Activated CD4-positive, alpha-beta memory T cell treated with anti-CD3 and anti-CD28 coated beads for 36 hours (primary cell): ENCODE measurements at regions of chr11 and their contacts with region 1.

Region 1: DNA sequence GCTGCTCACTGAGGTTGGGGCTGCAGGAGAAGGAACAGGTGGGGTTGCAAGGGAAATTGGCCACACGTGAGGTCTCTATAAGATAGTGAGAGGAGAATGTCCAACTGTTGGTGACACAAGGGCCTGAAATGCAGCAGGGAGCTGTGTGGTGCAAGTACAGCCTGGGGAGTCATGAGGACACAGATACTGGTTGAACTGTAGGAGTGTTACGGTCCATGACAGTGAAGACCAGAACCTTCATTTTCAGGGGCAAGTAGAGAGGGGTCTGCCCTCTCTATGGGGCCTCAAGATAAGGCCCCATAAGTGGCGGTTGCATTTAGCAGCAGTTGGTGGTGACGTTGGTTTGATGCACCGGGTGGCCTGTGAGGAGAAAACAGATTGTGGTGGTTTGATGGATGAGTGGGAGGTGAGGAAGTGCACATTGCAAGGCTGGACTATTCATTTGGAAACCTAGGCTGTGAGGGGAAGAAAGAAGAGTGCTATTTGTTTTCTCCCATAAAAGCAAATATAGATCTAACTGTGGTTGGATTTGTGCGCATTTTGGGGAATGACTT is 39.4 kb downstream of the MICAL2 start:
- DNase-seq: peak; percentile 83
- H3K4me3 Mint-ChIP-seq: peak overlapping the region; percentile 30
- H3K27ac Mint-ChIP-seq: peak overlapping the region; percentile 93
- H3K4me1 Mint-ChIP-seq: peaks cover 63% of the 10 kb centered on the region
- H3K27me3 Mint-ChIP-seq: no peaks in the 10 kb centered on the region

Region 2: GRCh38 chr11:11230802-11231562 is 918.8 kb before region 1 on chr11:
- CTCF ChIA-PET with region 1: no interaction called
- POLR2A ChIA-PET with region 1: no interaction called
- intact Hi-C with region 1: no loop called
- DNase-seq: peak; percentile 36
- H3K4me3 Mint-ChIP-seq: no peak overlapping the region
- H3K27ac Mint-ChIP-seq: no peak overlapping the region
- H3K4me1 Mint-ChIP-seq: no peaks in the 10 kb centered on the region
- H3K27me3 Mint-ChIP-seq: peaks cover 3% of the 10 kb centered on the region

Region 3: DNA sequence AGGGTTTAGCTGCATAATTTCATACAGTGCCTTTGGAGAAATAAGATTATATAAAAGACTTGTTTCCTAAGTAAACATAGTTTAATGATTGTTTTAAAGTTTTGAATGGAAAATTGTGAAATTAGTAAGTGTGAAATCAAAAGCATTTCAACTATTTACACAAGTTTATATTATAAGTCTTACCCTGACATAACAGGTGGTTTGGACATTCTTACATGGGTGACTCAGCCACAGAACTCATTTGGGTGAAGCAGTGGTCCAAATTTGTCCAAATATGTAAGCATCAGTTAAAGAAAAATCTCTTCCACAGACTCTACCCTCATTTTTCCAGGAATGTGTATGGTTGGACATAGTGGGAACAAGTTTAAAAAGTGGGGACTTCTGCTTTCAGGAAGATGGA is 240.0 kb before region 1 on chr11:
- CTCF ChIA-PET with region 1: no interaction called
- POLR2A ChIA-PET with region 1: no interaction called
- intact Hi-C with region 1: no loop called
- DNase-seq: no peak
- H3K4me3 Mint-ChIP-seq: no peak overlapping the region
- H3K27ac Mint-ChIP-seq: no peak overlapping the region
- H3K4me1 Mint-ChIP-seq: no peaks in the 10 kb centered on the region
- H3K27me3 Mint-ChIP-seq: no peaks in the 10 kb centered on the region

Region 4: DNA sequence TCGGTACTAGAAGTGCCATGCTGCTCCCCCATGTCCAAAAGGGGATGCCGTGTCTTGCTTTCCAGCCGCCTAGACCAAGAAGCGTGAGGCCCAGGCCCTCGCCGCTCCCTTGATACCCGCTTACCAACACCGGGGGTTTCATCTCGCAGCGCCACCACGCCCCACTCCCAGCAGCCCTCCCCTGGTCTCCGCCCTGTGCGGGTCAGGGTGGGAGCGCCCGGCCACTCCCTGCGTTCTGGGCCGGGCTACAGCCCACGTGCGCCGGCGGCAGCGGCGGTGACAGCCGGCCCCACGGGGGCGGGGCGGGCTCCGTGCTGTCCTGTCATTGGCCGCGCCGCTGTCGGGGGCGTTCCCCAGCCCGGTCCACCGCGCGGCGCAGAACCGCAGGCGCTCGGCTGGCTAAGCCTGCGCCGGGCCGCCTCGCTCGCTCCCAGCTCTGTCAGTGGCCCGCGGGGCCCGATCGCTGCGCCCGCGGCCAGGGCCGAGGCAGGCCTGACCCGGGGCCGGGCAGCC is 39.5 kb before region 1 on chr11 and contains the start of gene MICAL2:
- CTCF ChIA-PET with region 1: no interaction called
- POLR2A ChIA-PET with region 1: interaction called, 6 read pairs
- intact Hi-C with region 1: loop called (anchors 1 kb)
- DNase-seq: peak; percentile 91
- H3K4me3 Mint-ChIP-seq: peak within 1 kb of the TSS; percentile 82
- H3K27ac Mint-ChIP-seq: peak within 1 kb of the TSS; percentile 91
- H3K4me1 Mint-ChIP-seq: peaks cover 40% of the 10 kb centered on the region
- H3K27me3 Mint-ChIP-seq: no peaks in the 10 kb centered on the region
- total RNA-seq, gene MICAL2: 213 to 220 TPM

Region 5: DNA sequence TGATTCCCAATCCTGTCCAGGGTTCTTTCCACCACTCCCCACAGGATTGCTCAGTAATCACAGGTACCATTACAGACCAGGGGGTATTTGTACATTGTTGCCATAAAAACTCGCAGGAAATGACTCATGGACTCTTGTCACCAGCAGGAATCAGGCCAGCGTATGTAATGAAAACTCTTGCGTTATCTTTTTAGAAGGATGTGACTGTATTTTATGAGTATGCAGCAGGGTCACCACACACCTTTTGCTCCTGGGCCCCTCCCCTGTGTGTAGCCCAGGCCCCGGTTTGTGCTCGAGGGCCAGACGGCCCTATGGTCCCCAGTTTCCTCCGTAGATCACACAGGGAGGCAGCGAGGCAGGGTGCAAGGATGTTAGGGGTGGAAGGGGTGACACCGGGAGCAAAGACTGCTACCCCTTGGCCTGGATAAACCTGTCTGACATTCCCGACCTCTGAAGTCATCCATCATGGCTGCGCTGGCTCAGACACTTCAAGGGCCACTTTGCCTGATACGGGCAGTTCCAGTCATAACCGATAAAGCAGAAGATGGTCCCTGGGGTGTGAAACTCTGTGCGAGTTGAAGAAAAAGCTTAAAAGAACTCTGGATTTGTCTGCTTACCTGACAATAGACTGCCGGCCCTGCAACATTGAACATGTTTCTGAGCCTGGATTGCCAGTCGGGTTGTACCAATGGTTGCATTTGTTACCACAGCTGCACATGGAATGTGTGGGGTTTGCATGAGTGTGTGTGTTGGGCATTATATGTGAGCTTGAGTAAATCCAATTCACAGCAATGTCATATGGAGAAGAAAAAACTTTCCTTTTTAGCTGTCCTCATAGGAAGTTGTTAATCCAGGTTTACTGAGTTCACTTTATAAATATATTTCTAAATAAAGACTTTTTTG is 17.6 kb after region 1 on chr11:
- CTCF ChIA-PET with region 1: interaction called, 5 read pairs
- POLR2A ChIA-PET with region 1: interaction called, 8 read pairs
- intact Hi-C with region 1: loop called (anchors 1 kb)
- DNase-seq: peak; percentile 71
- H3K4me3 Mint-ChIP-seq: no peak overlapping the region
- H3K27ac Mint-ChIP-seq: peak overlapping the region; percentile 75
- H3K4me1 Mint-ChIP-seq: peaks cover 36% of the 10 kb centered on the region
- H3K27me3 Mint-ChIP-seq: no peaks in the 10 kb centered on the region

Region 6: DNA sequence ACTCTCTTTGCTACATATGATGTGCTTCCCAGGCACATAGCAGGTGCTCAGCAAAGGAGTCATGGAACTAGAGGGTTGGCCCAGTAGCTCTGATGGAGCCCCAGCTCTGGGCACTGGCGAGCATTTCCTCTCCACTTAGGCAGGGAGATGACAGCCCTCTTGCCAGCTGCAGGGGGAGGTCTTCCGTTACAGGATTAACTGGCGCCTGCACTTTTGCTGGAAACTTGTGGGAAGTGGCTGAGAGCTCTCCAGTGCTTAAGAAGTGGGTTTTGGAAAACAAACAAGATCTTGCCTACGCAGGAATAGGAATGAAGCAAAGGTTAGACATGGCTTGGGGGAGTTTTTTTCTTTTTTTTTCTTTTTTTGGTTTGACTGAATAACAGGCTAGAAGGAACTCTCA is 36.2 kb after region 1 on chr11:
- CTCF ChIA-PET with region 1: interaction called, 9 read pairs
- POLR2A ChIA-PET with region 1: interaction called, 17 read pairs
- intact Hi-C with region 1: loop called (anchors 1 kb)
- DNase-seq: no peak
- H3K4me3 Mint-ChIP-seq: no peak overlapping the region
- H3K27ac Mint-ChIP-seq: no peak overlapping the region
- H3K4me1 Mint-ChIP-seq: peaks cover 37% of the 10 kb centered on the region
- H3K27me3 Mint-ChIP-seq: no peaks in the 10 kb centered on the region

Region 7: GRCh38 chr11:12207384-12208150 is 57.8 kb after region 1 on chr11:
- CTCF ChIA-PET with region 1: interaction called, 4 read pairs
- POLR2A ChIA-PET with region 1: interaction called, 19 read pairs
- intact Hi-C with region 1: loop called (anchors 1 kb)
- DNase-seq: peak; percentile 84
- H3K4me3 Mint-ChIP-seq: peak overlapping the region; percentile 14
- H3K27ac Mint-ChIP-seq: peak overlapping the region; percentile 87
- H3K4me1 Mint-ChIP-seq: peaks cover 69% of the 10 kb centered on the region
- H3K27me3 Mint-ChIP-seq: no peaks in the 10 kb centered on the region

Region 8: GRCh38 chr11:12281571-12282478 is 132.1 kb after region 1 on chr11:
- CTCF ChIA-PET with region 1: interaction called, 4 read pairs
- POLR2A ChIA-PET with region 1: no interaction called
- intact Hi-C with region 1: loop called (anchors 5 kb)
- DNase-seq: peak; percentile 86
- H3K4me3 Mint-ChIP-seq: no peak overlapping the region
- H3K27ac Mint-ChIP-seq: no peak overlapping the region
- H3K4me1 Mint-ChIP-seq: peaks cover 7% of the 10 kb centered on the region
- H3K27me3 Mint-ChIP-seq: no peaks in the 10 kb centered on the region